Motor neuron (in vitro differentiated cells): ENCODE measurements at regions of chr14 and their contacts with region 1.

Region 1: DNA sequence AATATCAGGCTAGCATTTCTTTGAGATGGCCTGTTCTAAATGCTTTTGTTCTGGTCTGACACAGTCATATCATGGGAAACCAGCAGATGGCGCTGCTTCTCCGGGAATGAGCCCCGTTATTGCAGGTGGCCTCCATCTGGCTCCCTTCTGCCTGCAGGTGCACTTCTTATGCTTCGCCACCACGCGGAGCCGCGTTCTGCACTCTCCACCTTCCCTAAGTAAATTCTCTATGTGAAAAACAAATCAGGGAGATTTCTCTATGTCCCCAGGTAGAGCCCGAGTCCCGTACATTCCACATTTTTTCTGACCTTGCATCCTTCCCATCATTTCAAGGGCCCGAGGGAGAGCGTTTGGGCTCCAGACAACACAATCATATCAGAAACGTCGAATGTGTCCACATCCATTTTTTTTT is 26.2 kb downstream of the GLRX5 start:
- ATAC-seq: peak; percentile 89 to 99 (median 99)
- H3K4me3 ChIP-seq: no peak overlapping the region
- H3K27ac ChIP-seq: no peak overlapping the region
- H3K4me1 ChIP-seq: no peaks in the 10 kb centered on the region

Region 2: DNA sequence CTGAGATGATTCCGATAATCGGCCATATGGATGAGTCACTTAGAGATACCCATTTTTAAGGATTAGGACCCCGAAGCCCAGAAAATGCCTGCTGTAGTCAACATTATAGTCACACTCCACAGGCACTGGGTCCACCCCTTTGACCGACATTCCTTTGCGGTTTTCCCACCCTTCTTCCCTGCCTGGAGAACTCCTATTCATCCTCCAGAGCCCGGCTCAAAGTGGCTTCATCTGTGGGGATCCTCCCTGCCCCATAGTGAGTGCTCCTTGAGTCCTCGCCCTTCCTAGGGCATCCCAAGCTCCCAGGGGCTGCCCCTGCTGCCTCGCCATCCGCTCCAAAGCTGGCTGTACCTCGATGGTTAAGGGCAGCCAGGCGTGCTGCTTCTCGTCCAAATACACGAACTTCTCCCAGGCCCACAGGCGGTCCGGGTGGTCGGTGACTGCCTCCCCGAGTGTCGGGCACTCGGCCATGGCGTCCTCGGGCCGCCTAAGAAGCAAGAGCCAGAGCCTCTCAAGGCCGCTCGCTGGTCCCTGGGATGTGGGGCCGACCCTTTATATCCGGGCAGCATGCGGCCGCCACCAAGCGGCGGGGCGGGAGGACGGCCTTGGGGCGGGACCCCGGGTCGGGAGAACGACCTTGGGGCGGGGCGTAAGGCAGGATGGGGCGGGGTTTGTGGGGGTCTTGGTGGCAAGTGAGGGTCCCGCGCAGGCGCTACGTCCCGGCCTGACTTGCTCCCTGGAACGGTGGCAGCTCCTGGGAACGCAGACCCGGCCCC is 152.8 kb after region 1 on chr14 and contains the start of gene TCL1A:
- in situ Hi-C with region 1: no loop called
- ATAC-seq: no peak
- H3K4me3 ChIP-seq: no peak within 1 kb of the TSS
- H3K27ac ChIP-seq: no peak within 1 kb of the TSS
- H3K4me1 ChIP-seq: no peaks in the 10 kb centered on the region
- total RNA-seq, gene TCL1A: 1.1 TPM in 1 of 8 experiments, not detected in the others

Region 3: DNA sequence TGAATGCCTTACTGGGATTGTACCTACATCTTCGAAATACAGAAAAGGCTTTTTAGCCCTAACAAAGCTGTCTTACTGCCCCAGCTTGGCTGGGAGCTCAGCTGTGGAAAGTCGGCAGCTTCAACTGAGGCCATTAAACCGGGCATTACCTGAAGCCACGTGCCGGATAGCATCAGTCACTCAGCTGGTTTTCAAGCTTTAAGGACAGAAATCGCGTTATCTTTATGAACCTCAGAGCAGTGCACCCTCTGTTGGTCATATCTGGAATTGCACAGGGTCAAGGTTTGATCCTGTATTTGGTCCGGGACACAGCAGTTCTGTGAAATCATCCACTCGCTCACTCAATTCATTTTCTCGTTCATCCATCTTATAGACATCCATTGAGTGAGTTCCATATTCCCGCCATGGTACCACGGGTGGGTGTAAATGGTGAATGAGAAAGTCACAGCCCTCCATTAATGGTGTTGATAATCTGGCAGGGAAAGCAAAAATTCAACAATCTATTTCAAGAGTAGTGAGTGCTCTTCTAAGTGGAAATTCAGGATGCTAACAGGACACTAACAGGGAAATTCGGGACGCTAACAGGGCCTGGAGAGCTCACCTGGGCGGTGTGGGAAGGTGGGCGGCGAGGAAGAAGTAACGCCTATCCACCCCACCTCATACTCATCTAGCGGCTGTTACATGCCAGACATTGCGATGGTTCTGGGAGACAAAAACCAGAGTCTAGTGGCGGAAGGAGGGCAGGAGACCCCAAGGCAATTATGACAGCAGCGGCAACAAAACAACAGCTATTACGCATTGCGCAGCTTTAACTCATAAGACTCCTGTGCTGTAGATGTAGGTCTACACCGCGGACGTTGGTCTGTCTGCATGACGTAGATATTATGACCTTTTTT is 213.5 kb after region 1 on chr14:
- in situ Hi-C with region 1: loop called in 4 of 9 experiments (anchors 10 to 25 kb)
- ATAC-seq: peak in 3 of 8 experiments; percentile 29 to 56 (median 31)
- H3K4me3 ChIP-seq: no peak overlapping the region
- H3K27ac ChIP-seq: no peak overlapping the region
- H3K4me1 ChIP-seq: peaks cover 6 to 12% of the 10 kb centered on the region in 2 donors

Region 4: DNA sequence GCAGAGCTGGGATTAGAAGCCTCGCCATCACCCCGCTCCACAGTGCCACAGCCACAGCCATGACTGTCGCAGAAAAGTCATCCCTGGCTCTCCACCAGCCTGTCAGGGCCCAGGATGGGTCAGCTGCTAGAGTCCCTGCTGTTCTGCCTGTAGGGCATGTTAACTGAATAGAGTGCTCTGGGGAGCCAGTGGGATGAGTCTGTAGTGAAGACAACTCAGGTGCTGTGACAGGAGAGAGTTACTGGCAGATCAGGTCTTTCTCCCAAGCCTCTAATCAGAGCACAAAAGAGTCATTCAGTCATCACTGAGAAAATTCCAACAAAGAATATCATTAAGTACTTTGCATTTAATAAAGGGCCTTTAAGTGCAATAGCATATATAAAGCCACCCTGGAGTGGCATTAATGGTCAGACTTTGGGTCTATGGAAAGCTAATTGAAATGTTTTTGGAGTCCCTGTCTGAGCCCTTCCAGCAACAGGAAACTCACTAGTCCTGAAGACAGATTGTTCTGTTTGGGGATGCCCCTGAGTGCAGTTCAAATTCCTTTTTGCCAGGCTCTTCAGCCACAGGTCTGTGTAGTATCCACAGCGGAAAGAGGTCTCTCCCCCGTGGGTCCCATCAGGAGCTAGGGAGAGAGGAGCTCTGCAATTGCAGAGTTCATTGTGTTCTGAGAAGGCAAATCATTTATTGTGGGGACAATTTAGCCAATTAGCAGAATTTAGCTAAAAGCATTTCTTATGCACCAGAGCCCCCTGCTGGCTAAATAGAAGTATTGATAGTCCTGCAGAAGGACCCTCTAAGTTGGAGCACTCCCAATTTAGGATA is 433.0 kb after region 1 on chr14:
- in situ Hi-C with region 1: loop called (anchors 10 kb)
- ATAC-seq: peak; percentile 31 to 70 (median 54)
- H3K4me3 ChIP-seq: no peak overlapping the region
- H3K27ac ChIP-seq: no peak overlapping the region
- H3K4me1 ChIP-seq: peaks cover 4 to 6% of the 10 kb centered on the region in 2 donors

Region 5: GRCh38 chr14:96268431-96269358 is 707.7 kb after region 1 on chr14:
- in situ Hi-C with region 1: loop called in 2 of 9 experiments (anchors 10 to 25 kb)
- ATAC-seq: peak; percentile 59 to 92 (median 76)
- H3K4me3 ChIP-seq: no peak overlapping the region
- H3K27ac ChIP-seq: no peak overlapping the region
- H3K4me1 ChIP-seq: no peaks in the 10 kb centered on the region